ENCODE measurements at regions of chr19 and their contacts with region 1.

Region 1: DNA sequence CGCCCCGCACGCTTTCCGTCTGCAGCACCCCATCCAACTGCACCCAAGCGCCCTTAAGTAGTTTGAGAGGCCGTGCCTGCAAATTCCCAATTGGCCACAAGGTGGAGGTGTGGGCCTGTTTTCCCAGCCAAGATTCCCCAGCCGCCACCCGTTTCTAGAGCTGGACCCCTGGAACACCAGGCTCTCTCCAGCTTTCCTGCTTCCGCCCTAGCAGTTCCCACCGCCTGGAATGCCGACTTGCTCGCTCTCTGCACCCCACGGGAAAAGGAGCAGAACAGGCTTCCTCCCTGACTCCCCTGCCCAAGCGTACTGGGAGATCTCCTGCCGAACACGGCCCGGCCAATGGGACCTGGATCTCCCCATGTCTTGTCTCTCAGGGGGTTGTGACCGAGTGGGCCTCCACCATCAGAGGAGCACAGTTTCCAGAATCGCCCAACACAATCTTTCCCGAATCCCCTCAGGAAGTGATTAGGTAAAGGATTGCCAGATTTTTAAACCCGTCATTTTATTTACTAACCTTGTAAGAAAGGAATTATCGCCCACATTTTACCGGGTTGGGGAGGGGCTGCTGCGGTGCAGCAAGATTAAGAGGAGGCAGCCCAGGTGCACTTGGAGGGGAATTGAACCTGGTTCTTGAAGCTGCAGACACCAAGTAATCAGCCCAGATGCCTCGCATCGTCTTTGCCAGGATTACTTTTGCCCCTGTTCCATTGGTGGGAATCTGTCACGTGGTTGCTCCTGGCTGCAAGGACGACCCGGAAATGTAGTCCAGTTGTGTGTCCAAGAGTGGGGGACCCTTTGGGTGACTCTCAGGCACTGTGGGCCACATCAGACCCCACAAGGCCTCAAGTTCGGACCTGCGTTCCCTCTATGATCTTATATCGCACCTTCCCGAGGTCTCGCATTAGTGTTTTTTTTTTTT is 3.5 kb upstream of the NAPSA start:
- DNase-seq: peak; percentile 95 to 99
- ATAC-seq: peak; percentile 95
- H3K4me3 ChIP-seq: peak overlapping the region; percentile 62
- H3K27ac ChIP-seq: peak overlapping the region; percentile 85 to 87
- H3K4me1 ChIP-seq: peaks cover 5% of the 10 kb centered on the region
- CTCF ChIP-seq: peak; percentile 94
- EP300 ChIP-seq: no peak
- POLR2A ChIP-seq: peak; percentile 79
- RAD21 ChIP-seq: peak; percentile 95

Region 2: GRCh38 chr19:50349277-50350057 is 19.4 kb before region 1 on chr19:
- CTCF ChIA-PET with region 1: interaction called, 18 read pairs
- POLR2A ChIA-PET with region 1: no interaction called
- DNase-seq: no peak
- ATAC-seq: no peak
- H3K4me3 ChIP-seq: no peak overlapping the region
- H3K27ac ChIP-seq: no peak overlapping the region
- H3K4me1 ChIP-seq: no peaks in the 10 kb centered on the region
- CTCF ChIP-seq: no peak
- EP300 ChIP-seq: no peak
- POLR2A ChIP-seq: no peak
- RAD21 ChIP-seq: no peak

Region 3: DNA sequence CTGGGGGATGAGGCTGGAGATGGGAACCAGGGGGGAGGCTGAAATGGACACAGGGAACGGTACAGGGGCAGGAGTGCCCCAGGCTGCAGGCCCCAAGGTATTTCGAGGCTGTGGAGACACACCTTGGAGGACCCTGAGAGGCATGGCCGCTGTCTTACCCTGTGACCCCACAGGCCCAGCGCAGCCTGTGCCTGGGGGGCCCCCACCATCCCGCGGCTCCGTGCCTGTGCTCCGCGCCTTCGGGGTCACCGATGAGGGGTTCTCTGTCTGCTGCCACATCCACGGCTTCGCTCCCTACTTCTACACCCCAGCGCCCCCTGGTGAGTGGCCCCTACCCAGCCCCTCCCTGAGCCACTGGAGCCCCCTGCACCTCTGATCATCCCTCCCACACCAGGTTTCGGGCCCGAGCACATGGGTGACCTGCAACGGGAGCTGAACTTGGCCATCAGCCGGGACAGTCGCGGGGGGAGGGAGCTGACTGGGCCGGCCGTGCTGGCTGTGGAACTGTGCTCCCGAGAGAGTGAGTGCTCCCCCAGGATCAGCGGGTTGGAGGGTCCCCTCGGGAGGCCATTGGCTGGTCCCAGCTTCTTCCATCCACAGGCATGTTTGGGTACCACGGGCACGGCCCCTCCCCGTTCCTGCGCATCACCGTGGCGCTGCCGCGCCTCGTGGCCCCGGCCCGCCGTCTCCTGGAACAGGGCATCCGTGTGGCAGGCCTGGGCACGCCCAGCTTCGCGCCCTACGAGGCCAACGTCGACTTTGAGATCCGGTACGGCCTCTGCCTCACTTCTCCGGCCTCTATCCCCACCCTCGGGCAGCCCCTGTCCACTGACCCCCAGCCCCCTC is 32.9 kb after region 1 on chr19:
- CTCF ChIA-PET with region 1: interaction called, 12 read pairs
- POLR2A ChIA-PET with region 1: no interaction called
- DNase-seq: no peak
- ATAC-seq: no peak
- H3K4me3 ChIP-seq: no peak overlapping the region
- H3K27ac ChIP-seq: no peak overlapping the region
- H3K4me1 ChIP-seq: no peaks in the 10 kb centered on the region
- CTCF ChIP-seq: no peak
- EP300 ChIP-seq: no peak
- POLR2A ChIP-seq: no peak
- RAD21 ChIP-seq: no peak

Region 4: DNA sequence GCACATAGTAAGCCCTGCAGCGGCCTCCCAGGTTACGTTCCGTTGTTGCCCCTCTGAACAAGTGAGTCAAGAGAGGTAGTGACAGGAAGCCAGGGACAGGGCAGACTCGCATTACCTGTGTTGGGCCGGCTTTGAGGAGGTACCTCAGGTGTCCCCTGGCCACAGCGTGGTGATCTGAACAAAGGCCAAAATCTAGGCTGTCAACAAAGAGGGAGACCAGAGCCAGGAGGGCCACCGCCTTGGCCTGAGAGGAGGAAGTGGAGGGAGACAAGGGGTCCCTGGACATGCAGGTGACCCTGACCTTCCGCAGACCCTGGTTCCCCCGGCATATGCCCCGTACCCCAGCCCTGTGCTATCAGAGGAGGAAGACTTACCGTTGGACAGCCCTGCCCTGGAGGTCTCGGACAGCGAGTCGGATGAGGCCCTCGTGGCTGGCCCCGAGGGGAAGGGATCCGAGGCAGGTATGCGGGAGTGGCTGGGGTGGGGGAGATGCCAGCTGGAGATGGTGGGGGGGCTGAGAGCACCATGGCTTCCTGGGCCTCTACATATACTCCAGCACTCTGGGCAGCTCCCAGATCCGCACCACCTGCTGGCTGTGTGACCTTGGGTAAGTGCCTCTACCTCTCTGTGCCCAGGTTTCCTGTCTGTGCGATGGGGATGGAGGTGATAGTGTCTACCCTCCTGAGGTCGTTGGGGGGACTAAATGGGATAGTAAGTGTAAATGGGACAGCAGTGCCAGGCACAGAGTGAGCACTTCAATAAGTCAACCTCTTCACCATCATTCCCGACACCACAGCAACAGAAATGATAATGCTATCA is 54.6 kb after region 1 on chr19:
- CTCF ChIA-PET with region 1: interaction called, 10 read pairs
- POLR2A ChIA-PET with region 1: no interaction called
- DNase-seq: no peak
- ATAC-seq: no peak
- H3K4me3 ChIP-seq: no peak overlapping the region
- H3K27ac ChIP-seq: no peak overlapping the region
- H3K4me1 ChIP-seq: no peaks in the 10 kb centered on the region
- CTCF ChIP-seq: no peak
- EP300 ChIP-seq: no peak
- POLR2A ChIP-seq: no peak
- RAD21 ChIP-seq: no peak

Region 5: DNA sequence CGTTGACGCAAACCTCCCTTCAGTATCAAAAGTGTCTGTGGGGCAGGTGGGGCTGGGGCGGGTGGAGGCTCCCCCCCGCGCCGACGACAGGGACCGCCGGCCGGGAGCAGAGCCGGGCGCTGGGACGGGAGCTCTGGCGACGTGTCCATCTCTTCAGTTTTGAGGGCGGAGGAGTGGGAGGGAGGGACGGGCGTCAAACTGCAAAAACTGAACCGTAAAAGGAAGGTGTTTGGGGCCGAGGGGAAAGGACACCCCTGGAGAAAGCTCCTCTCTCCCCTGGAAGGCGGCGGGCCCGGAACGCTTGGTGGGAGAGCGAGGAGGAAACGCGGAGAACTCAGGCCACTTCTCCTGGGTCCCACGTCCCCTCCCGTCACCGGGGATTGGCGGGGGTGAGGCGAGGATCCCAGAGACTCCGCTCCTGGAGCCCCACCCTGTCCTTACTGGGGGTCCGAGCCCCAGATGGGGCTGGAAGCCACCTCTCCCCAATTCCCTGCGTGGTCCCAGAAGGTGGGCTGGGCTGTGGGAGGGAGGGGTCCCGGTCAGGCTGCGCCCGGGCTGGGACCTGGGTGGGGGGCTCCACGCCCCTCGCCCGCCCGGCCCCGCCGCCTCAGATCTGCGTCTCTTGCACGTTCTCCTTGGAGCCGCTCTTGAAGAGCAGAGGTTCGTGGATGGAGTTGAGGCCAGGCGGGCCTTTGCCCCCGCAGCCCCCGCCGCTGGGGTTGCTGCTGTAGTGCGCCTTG is 148.2 kb after region 1 on chr19:
- CTCF ChIA-PET with region 1: no interaction called
- POLR2A ChIA-PET with region 1: no interaction called
- DNase-seq: peak in 1 of 2 experiments; percentile 47
- ATAC-seq: peak in 1 of 2 experiments; percentile 7; a peak in 3 of 6 replicates
- H3K4me3 ChIP-seq: peak overlapping the region; percentile 13; the same call in 1 of the 3 replicates
- H3K27ac ChIP-seq: peak overlapping the region; percentile 5 to 59; a peak in 3 of 6 replicates
- H3K4me1 ChIP-seq: peaks cover 10% of the 10 kb centered on the region; the same call in 1 of the 3 replicates
- CTCF ChIP-seq: no peak
- EP300 ChIP-seq: no peak
- POLR2A ChIP-seq: no peak
- RAD21 ChIP-seq: no peak

Measured in A549 (cell line).